Thyroid gland (tissue), 4 donors: ENCODE measurements at regions of chr10 and their contacts with region 1.

Region 1: DNA sequence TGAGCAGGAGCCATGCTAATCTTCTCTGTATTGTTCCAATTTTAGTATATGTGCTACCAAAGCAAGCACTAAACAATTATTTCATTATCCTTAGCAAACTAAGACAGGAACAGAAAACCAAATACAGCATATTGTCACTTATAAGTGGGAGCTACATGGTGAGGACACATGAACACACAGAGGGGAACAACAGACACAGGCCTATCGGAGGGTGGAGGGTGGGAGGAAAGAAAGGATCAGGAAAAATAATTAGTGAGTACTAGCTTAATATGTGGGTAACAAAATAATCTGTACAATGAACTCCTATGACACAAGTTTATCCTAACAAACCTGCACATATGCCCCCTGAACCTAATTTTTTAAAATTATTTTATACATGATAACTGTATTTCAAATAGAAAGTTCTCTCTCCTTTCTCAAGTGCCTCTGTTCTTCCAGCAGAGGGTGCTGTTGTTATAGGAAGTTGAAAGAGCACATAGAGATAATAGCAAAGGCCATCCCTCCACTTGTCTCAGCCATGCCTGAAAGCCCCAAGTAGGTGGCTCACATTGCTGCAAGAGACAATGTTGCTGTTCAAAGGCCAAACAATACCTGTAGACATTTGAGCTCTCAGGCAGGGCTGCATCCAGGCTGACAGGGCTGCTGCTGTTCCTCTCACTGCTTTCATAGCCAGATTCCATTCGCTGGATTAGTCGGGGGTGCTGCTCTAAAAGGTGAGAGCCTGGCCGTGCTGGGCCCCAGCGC is 33.4 kb upstream of the PPP3CB start:
- DNase-seq: peak; percentile 44 to 49
- H3K4me3 ChIP-seq: no peak overlapping the region
- H3K27ac ChIP-seq: no peak overlapping the region
- H3K4me1 ChIP-seq: peaks cover 11 to 16% of the 10 kb centered on the region in 2 donors
- H3K27me3 ChIP-seq: no peaks in the 10 kb centered on the region
- CTCF ChIP-seq: peak; percentile 51 to 82 (median 73)
- POLR2A ChIP-seq: peak in 1 of 2 donors; percentile 9

Region 2: GRCh38 chr10:73480158-73480557 is 49.1 kb before region 1 on chr10:
- intact Hi-C with region 1: no loop called
- DNase-seq: no peak
- H3K4me3 ChIP-seq: no peak overlapping the region
- H3K27ac ChIP-seq: no peak overlapping the region
- H3K4me1 ChIP-seq: no peaks in the 10 kb centered on the region
- H3K27me3 ChIP-seq: no peaks in the 10 kb centered on the region
- CTCF ChIP-seq: no peak
- POLR2A ChIP-seq: no peak

Region 3: GRCh38 chr10:73559590-73559989 is 30.3 kb after region 1 on chr10:
- intact Hi-C with region 1: loop called (anchors 2 kb)
- DNase-seq: no peak
- H3K4me3 ChIP-seq: no peak overlapping the region
- H3K27ac ChIP-seq: no peak overlapping the region
- H3K4me1 ChIP-seq: peaks cover 5 to 12% of the 10 kb centered on the region in 2 donors
- H3K27me3 ChIP-seq: no peaks in the 10 kb centered on the region
- CTCF ChIP-seq: no peak
- POLR2A ChIP-seq: no peak